ENCODE measurements at regions of chr16 and their contacts with region 1.

Region 1: GRCh38 chr16:56576585-56577293 is 11.9 kb downstream of the MT4 start:
- DNase-seq: no peak
- H3K4me3 ChIP-seq: no peak overlapping the region
- H3K27me3 ChIP-seq: peaks cover 2% of the 10 kb centered on the region
- CTCF ChIP-seq: peak; percentile 83

Region 2: GRCh38 chr16:56343661-56344526 is 232.8 kb before region 1 on chr16:
- CTCF ChIA-PET with region 1: no interaction called
- POLR2A ChIA-PET with region 1: no interaction called
- DNase-seq: no peak
- H3K4me3 ChIP-seq: no peak overlapping the region
- H3K27me3 ChIP-seq: no peaks in the 10 kb centered on the region
- CTCF ChIP-seq: no peak

Region 3: GRCh38 chr16:56558024-56558747 is 18.6 kb before region 1 on chr16:
- CTCF ChIA-PET with region 1: interaction called, 22 read pairs
- POLR2A ChIA-PET with region 1: no interaction called
- DNase-seq: no peak
- H3K4me3 ChIP-seq: no peak overlapping the region
- H3K27me3 ChIP-seq: peaks cover 11% of the 10 kb centered on the region
- CTCF ChIP-seq: no peak

Region 4: DNA sequence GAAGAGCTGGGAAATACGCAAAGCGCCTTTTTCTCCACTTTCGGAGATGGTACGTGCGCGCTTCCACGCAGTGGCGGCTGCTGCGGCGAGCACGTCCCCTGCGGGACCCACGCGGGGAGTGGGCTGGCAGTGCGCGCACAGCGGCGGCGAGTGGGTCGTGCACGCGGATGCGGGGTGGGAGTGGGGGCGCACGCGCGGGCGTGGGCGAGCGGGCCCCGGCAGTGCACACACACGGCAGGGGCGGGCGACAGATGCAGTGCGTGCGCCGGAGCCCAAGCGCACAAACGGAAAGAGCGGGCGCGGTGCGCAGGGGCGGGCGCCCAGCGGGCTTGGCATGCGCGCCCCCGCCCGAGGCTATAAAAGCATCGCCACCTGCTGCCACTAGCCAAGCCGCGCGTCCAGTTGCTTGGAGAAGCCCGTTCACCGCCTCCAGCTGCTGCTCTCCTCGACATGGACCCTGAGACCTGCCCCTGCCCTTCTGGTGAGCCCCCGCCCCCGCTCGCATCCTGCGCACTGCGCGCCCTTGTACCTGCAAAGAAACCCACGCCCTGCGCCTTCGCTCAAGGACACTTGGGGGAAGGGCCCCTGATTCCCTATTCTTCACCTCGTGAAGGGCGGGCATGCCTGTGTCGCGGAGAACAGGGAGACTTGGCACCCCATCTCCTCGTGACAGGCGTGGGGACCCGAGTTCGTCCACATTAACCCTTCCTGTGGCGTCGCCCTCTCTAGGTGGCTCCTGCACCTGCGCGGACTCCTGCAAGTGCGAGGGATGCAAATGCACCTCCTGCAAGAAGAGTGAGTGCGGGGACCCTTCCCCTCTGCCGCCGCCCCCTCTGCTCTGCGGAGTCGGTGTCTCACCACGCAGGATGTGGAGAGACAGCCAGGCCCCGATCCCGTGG is 12.7 kb after region 1 on chr16 and contains the start of gene MT3:
- CTCF ChIA-PET with region 1: interaction called, 26 read pairs
- POLR2A ChIA-PET with region 1: no interaction called
- DNase-seq: no peak
- H3K4me3 ChIP-seq: peak within 1 kb of the TSS; percentile 28
- H3K27me3 ChIP-seq: peaks cover 34% of the 10 kb centered on the region
- CTCF ChIP-seq: no peak
- polyA plus RNA-seq, gene MT3: not detected in 2 replicates

Region 5: DNA sequence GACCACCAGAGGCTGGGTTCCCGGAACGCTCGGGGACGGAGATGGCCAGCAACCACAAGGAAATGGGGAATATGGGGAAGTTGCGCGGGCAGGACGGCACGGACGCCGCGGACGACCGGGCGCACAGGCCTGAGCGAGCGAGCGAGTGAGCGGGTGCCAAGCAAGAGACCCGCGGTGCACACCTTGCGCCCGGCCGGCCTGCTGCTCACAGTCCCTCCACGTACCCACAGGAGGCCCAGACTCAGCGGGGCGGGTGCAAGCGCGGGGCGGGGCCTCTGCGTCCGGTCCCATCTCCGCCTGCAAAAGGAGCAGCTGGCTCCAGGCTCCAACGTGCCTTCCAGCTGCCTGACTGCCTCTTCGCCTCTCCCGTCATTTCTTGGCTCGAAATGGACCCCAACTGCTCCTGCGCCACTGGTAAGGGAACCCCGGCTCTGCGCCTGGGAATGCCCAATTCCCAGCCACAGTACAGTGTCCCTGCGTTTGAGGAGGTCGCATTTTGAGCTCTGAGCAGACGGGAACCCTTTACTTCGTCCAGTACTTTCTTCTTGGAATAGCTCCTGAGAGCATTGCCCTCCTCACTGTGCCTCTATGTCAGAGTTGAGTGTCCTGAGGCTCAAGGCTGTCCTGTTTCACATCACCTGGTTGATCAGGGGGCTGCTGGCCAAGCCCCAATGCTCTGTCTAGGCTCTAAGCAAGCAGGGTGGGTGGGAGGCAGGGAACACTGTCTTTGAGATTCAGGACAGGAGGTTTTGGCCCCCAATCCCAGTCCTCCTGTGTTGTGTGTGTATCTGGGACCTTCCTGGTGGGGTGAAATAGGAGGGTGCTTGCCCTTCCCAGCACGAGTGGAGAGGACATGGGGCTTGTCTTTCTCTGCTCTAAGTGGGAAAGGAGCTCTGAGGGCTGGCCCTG is 40.7 kb after region 1 on chr16:
- CTCF ChIA-PET with region 1: no interaction called
- POLR2A ChIA-PET with region 1: no interaction called
- DNase-seq: no peak
- H3K4me3 ChIP-seq: peak overlapping the region; percentile 34
- H3K27me3 ChIP-seq: no peaks in the 10 kb centered on the region
- CTCF ChIP-seq: no peak

Region 6: DNA sequence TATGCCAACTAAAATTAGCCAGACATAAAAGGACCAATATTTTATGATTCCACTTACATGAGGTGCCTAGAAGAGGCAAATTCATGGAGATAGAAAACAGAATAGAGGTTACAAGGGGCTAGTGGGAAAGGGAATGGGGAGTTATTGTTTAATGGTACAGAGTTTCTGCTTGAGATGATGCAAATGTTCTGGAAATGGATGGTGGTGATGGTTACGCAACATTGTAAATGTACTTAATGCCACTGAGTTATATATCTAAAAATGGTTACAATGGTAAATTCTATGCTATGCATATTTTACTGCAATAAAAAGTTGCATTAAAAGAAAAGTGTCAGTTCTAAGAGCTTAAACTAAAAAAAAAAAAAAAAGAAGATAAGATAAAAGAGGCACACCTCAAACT is 123.5 kb after region 1 on chr16:
- CTCF ChIA-PET with region 1: interaction called, 53 read pairs
- POLR2A ChIA-PET with region 1: no interaction called
- DNase-seq: no peak
- H3K4me3 ChIP-seq: no peak overlapping the region
- H3K27me3 ChIP-seq: no peaks in the 10 kb centered on the region; the same call in 1 of the 2 replicates
- CTCF ChIP-seq: no peak

Region 7: GRCh38 chr16:56851671-56852400 is 275.1 kb after region 1 on chr16:
- CTCF ChIA-PET with region 1: interaction called, 10 read pairs
- POLR2A ChIA-PET with region 1: no interaction called
- DNase-seq: no peak
- H3K4me3 ChIP-seq: no peak overlapping the region
- H3K27me3 ChIP-seq: no peaks in the 10 kb centered on the region
- CTCF ChIP-seq: peak; percentile 66

Measured in BJ (cell line).